ENCODE measurements at regions of chr17 and their contacts with region 1.

Region 1: DNA sequence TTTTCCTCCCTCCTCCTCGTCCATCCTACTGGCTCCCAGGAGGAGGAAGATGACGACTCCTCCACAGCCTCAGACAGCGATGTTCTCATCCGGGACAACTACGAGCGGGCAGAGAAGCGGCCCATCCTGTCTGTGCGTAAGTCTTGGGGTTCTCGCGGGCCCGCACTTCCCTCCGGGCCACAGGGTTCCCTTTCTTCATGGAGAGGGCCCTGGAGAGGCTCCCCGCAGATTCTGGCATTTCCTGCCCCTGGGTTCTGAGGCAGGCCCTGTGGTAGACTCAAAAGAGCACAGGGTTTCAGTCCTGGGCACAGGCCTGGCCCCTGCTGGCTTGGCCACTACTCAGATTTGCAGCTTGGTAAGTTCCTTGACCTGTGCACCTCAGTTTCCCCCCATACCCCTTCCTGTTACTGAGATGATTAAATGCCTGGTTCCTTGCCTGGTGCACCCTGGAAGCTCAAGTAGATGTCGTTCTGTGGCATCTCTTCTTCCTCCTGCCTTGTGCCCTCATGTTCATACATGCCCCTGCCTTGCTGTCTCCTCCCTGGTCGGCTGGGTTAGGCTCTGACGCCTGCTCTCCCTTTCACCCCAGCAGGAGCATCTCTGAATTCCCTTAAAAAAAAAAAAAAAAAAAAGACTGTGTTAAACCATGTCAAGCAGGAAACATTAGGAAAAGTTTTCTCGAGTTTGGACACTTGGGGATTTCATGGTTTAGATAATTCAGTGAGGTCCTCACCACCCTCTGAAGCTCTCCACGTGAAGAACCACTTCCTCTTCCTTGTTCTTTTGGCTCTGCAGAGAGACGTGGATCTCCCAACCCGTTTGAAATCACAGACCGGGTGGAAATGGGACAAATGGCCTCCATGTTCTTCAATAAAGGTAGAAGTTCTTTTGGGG is 14.3 kb upstream of the NAT9 start:
- DNase-seq: no peak
- ATAC-seq: no peak
- H3K4me3 Mint-ChIP-seq: no peak overlapping the region
- H3K27ac Mint-ChIP-seq: no peak overlapping the region
- H3K4me1 Mint-ChIP-seq: peaks cover 32% of the 10 kb centered on the region
- H3K27me3 Mint-ChIP-seq: no peaks in the 10 kb centered on the region

Region 2: GRCh38 chr17:74340470-74341023 is 449.9 kb before region 1 on chr17:
- CTCF ChIA-PET with region 1: no interaction called
- POLR2A ChIA-PET with region 1: no interaction called
- intact Hi-C with region 1: no loop called
- DNase-seq: no peak
- ATAC-seq: no peak
- H3K4me3 Mint-ChIP-seq: no peak overlapping the region
- H3K27ac Mint-ChIP-seq: no peak overlapping the region
- H3K4me1 Mint-ChIP-seq: no peaks in the 10 kb centered on the region
- H3K27me3 Mint-ChIP-seq: no peaks in the 10 kb centered on the region

Region 3: GRCh38 chr17:74742153-74742515 is 48.3 kb before region 1 on chr17:
- CTCF ChIA-PET with region 1: interaction called, 35 read pairs
- POLR2A ChIA-PET with region 1: interaction called, 7 read pairs
- intact Hi-C with region 1: loop called (anchors 1 to 2 kb)
- DNase-seq: peak; percentile 72
- ATAC-seq: peak; percentile 13
- H3K4me3 Mint-ChIP-seq: peak overlapping the region; percentile 50
- H3K27ac Mint-ChIP-seq: peak overlapping the region; percentile 88
- H3K4me1 Mint-ChIP-seq: peaks cover 81% of the 10 kb centered on the region
- H3K27me3 Mint-ChIP-seq: no peaks in the 10 kb centered on the region

Region 4: DNA sequence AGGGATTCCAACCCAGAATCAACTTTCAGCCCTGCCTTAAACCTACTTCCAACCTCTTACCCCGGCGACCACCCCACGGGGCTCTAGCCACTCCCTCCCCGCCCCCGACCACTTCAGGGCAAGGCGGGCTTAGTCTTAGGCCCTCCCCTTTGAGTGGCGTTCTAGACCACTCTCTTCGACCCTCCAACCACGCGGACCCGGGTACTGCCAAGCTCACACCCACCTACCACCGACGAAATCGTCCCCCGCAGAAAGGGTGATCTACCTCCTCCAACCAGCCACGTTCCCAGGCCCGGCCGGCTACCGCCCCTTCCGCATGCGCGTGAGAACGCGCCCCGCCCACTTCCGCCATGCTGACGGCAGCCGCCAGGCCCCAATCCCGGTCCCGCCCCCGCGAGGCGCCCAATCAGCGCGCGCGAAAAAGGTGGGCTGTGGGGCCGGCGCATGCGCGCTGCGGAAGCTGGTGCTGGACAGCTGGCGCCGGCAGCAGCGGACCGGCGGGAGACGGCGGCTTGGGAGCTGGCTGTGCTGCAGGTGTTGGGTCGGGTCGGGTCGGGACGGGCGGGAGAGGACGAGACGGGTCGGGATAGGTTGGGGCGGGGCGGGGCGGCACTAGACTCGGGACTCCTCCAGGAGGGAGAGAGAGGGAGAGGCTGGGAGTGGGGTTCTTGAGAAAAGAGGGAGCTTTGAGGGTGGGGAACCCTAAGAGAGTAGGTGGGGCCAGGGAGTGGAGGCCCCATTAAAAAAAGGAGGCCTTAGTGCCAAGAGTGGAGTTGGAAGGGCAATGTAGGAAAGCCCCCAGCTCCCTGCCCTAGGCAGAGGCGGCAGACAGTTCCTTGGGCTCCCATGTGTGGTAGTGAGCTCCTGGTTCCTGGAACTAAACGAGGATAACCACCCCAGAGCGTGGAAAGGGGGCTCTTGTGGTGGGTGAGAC is 14.1 kb before region 1 on chr17 and contains the start of gene NAT9:
- CTCF ChIA-PET with region 1: interaction called, 25 read pairs
- POLR2A ChIA-PET with region 1: interaction called, 6 read pairs
- intact Hi-C with region 1: no loop called
- DNase-seq: peak; percentile 100
- ATAC-seq: peak; percentile 76
- H3K4me3 Mint-ChIP-seq: peak within 1 kb of the TSS; percentile 98
- H3K27ac Mint-ChIP-seq: peak within 1 kb of the TSS; percentile 94
- H3K4me1 Mint-ChIP-seq: peaks cover 59% of the 10 kb centered on the region
- H3K27me3 Mint-ChIP-seq: no peaks in the 10 kb centered on the region
- total RNA-seq, gene NAT9: 23.7 to 39.6 TPM

Region 5: GRCh38 chr17:74807925-74808324 is 17.5 kb after region 1 on chr17:
- CTCF ChIA-PET with region 1: interaction called, 12 read pairs
- POLR2A ChIA-PET with region 1: no interaction called
- intact Hi-C with region 1: no loop called
- DNase-seq: no peak
- ATAC-seq: no peak
- H3K4me3 Mint-ChIP-seq: no peak overlapping the region
- H3K27ac Mint-ChIP-seq: no peak overlapping the region
- H3K4me1 Mint-ChIP-seq: no peaks in the 10 kb centered on the region
- H3K27me3 Mint-ChIP-seq: no peaks in the 10 kb centered on the region

Region 6: DNA sequence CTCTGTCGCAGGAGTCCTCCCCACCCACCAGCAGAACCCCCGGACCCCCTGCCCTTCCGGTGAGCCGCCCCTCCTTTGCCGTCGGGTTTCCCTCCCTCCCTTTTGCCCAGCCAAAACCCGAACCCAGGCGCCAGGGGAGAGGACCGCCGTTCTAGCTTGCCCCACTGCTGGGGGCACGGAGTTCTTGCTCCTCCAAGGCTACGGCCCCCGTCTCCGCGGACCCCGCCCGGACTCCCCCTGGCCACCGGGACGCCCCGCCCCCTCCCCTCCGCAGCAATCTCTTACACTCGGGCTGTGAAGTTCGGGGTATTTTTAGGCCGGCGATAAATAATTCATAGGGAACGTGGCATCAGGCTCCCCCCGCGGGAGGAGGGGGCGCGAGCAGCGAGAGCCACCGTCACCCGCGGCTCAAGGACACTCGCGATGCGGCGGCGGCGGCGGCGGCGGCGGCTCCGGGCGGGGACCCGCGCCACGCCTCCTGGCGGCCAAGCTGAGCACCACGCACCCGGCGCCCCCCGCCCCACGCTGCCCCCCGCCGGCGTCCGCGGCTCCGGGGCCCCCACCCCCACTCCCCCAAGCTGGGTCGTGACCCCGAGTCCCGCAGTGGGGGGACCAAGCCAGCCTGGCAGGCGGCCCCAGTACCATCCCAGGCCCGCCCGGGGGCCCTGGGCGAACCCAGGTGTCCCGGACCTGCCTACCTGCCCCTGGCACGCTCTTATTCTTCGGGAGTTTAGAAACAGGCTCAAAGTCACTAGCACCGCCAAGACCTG is 69.2 kb after region 1 on chr17 and contains the start of gene GRIN2C:
- CTCF ChIA-PET with region 1: interaction called, 114 read pairs
- POLR2A ChIA-PET with region 1: no interaction called
- intact Hi-C with region 1: loop called (anchors 1 kb)
- DNase-seq: peak; percentile 61
- ATAC-seq: no peak
- H3K4me3 Mint-ChIP-seq: peak within 1 kb of the TSS; percentile 21
- H3K27ac Mint-ChIP-seq: no peak within 1 kb of the TSS
- H3K4me1 Mint-ChIP-seq: peaks cover 13% of the 10 kb centered on the region
- H3K27me3 Mint-ChIP-seq: peaks cover 39% of the 10 kb centered on the region
- total RNA-seq, gene GRIN2C: not detected

Region 7: DNA sequence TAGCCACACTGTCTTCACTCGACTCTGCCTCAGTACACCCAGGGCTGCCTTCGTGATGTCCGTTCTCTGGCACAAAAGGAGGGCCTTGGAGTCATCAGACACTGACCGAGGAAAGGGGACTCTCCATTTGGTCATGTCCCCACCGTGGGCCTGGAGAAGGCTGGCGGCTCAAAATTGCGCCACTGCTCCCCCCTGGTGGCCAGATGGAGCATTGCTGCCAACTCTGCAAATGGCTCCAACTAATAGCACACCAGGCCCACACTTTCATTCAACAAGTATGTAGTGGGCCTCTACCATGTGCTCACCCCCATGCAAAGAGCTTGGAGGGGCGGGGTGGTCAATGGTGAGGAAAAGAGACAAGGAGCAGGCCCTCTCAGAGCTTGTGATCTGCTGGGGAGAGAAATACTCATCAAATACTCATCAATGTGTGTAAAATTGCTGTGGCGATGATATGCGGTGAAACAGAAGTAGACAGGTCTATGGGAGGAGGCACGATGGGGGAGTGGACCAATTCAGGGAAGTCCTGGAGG is 74.5 kb after region 1 on chr17:
- CTCF ChIA-PET with region 1: interaction called, 114 read pairs
- POLR2A ChIA-PET with region 1: no interaction called
- intact Hi-C with region 1: loop called (anchors 1 kb)
- DNase-seq: peak; percentile 83
- ATAC-seq: peak; percentile 65
- H3K4me3 Mint-ChIP-seq: no peak overlapping the region
- H3K27ac Mint-ChIP-seq: peak overlapping the region; percentile 39
- H3K4me1 Mint-ChIP-seq: peaks cover 11% of the 10 kb centered on the region
- H3K27me3 Mint-ChIP-seq: peaks cover 12% of the 10 kb centered on the region

Region 8: DNA sequence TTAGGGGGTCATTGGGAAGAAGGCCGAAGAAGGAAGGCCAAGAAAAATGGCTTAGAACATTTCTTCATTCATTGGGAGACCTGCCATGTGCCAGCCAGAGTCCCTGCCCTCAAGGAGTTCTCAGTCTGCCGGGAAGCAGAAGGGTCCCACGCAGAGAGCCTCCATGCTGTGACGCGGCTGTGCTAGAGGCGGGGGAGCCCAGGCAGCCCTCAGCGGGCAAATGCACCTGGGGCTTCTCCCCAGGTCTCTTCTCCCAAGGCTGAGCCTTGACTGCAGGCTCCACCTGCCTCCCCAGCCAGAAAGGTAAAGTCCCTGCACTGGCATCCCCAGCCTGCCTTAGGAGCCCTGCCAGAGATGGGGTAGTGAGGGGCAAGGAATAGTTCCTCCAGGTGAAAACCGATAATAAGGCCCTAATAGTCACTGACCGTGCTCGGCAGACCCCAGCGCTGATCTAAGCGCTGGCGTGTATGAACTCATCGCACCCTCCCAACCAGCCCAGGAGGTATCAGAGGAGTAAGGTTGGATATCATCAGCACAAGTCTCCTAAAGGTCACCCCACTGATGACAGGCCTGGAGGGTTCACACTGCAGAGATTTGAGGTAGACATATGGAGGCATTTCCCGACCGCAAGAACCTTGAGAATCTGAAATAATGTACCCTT is 191.0 kb after region 1 on chr17:
- CTCF ChIA-PET with region 1: no interaction called
- POLR2A ChIA-PET with region 1: no interaction called
- intact Hi-C with region 1: no loop called
- DNase-seq: no peak
- ATAC-seq: no peak
- H3K4me3 Mint-ChIP-seq: peak overlapping the region; percentile 77
- H3K27ac Mint-ChIP-seq: peak overlapping the region; percentile 79
- H3K4me1 Mint-ChIP-seq: peaks cover 11% of the 10 kb centered on the region
- H3K27me3 Mint-ChIP-seq: peaks cover 4% of the 10 kb centered on the region